ENCODE measurements at regions of chr1 and their contacts with region 1.

Region 1: DNA sequence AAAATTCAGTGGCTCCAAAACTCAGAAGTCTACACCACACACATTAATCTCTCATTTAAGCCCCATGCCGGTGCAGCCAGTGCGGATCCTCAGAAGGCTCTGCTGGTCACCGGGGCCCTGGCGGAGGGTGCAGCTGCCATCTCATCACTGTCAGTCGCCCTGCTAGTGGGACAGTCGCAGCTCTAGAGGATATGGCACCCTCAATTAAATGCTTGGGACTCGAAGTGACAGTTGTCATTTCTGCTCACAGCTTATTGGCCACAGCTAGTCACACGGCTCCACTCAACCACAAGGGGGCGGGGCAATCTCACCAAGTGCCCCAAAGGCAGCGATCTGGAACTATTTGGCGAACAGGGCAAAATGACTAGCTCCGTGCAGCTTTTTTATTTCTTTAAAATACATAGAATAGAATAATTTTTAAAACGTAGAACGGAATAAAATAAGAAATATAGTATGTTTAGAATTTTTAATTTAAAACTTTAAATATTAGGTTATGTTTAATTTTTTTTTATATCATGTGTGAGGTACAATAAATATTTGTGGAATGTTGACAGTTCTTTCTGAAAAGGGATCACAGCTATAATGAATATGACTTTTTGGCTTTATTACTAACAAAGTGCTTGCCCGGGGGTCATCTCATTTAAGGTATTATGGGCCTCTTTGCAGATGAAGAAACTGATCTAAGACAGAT is 8.0 kb upstream of the MAN1C1 start:
- DNase-seq: peak; percentile 94
- H3K4me3 Mint-ChIP-seq: no peak overlapping the region
- H3K27ac Mint-ChIP-seq: no peak overlapping the region
- H3K4me1 Mint-ChIP-seq: peaks cover 18% of the 10 kb centered on the region
- H3K27me3 Mint-ChIP-seq: peaks cover 63% of the 10 kb centered on the region

Region 2: DNA sequence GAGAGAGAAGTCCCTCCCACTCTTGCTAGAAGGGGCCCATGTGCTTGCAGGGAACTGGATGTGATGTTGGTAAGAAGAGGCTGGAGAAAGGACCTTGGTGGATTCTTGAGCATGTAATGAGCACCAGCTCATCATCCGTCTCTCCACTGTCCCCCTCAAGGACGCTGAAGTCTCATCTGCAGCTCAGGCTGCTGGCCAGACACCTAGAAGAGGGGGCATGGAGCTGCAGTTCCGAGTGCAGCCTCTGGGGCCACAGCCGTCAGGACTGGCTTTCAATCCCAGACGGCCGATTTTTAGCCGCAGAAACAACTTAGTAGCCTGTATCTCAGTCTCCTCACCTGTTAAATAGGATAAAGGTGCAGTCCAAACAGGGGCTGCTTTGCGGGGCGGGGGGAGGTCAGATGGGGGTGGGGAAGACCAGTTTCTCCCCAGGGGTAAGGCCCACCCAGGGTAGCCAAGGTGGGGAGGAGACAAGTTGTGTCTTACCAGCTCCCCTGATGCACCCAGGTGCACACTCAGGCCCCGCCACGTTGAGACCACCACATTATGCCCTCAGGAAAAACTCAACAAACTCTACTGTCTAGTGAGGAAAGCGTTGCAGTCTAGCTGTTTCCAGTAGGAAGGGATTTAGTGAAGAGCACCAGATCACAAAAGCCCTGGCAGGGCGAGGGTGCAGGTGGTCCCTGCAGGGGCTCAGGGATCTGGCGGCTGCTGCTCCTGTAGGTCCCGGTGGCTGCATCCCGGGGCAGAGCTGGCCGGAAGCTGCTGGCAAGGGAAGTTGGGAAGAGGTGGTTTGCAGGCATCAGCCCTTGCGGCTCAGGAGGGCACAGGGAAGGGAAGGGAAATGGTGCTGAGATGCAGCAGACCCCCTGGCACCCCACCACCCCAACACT is 35.7 kb before region 1 on chr1:
- CTCF ChIA-PET with region 1: no interaction called
- DNase-seq: peak; percentile 70
- H3K4me3 Mint-ChIP-seq: no peak overlapping the region
- H3K27ac Mint-ChIP-seq: no peak overlapping the region
- H3K4me1 Mint-ChIP-seq: peaks cover 21% of the 10 kb centered on the region
- H3K27me3 Mint-ChIP-seq: peaks cover 23% of the 10 kb centered on the region

Region 3: DNA sequence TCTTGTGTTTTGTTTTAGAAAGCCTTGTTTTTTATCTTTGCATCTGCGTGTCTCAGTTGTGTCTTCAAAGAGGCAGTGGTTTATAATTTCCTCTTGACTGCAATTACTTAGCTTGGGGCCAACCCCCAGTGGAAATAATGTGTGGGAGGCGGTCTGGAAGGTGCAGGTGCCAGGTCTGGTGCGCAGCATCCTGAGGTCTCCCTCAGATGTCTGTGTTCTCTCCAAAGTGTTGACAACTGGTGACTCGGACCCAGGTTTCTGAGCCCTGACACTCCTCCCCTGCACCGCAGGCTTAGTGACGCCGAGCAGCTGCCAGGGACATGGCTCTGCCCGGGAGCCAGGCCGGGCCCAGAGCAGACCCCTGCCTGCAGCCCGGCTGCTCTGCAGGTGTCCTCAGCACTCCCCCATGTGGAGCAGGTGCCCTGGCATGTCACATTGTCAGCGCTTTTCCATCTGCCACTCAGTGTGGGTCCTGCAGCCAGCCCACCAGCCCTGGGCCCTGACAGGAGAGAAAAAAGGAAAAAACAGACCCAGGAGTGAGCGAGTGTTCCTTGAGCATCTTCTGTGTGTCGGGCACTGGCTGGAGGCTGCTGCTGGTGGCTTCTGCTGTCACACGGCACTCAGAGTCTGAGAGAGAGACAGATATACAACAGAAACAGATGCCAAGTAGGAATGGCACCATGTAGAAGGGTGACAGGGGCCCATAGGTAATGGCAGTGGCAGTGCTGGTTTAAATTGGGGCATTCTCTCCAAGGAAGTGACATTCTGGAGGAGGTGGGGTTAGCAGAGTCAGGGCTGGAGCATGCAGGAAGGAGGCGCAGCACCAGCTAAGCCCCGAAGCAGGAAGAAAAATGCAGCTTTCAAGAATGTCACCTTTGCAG is 166.5 kb after region 1 on chr1:
- CTCF ChIA-PET with region 1: interaction called, 10 read pairs
- DNase-seq: peak; percentile 92
- H3K4me3 Mint-ChIP-seq: peak overlapping the region; percentile 53
- H3K27ac Mint-ChIP-seq: peak overlapping the region; percentile 93
- H3K4me1 Mint-ChIP-seq: peaks cover 80% of the 10 kb centered on the region
- H3K27me3 Mint-ChIP-seq: peaks cover 26% of the 10 kb centered on the region

Region 4: GRCh38 chr1:25796811-25797458 is 188.3 kb after region 1 on chr1:
- CTCF ChIA-PET with region 1: interaction called, 84 read pairs
- DNase-seq: peak; percentile 92
- H3K4me3 Mint-ChIP-seq: peak overlapping the region; percentile 55
- H3K27ac Mint-ChIP-seq: peak overlapping the region; percentile 46
- H3K4me1 Mint-ChIP-seq: peaks cover 61% of the 10 kb centered on the region
- H3K27me3 Mint-ChIP-seq: peaks cover 17% of the 10 kb centered on the region

Region 5: GRCh38 chr1:25802915-25803314 is 194.3 kb after region 1 on chr1:
- CTCF ChIA-PET with region 1: interaction called, 84 read pairs
- DNase-seq: peak; percentile 40
- H3K4me3 Mint-ChIP-seq: no peak overlapping the region
- H3K27ac Mint-ChIP-seq: no peak overlapping the region
- H3K4me1 Mint-ChIP-seq: peaks cover 43% of the 10 kb centered on the region
- H3K27me3 Mint-ChIP-seq: peaks cover 19% of the 10 kb centered on the region

Region 6: DNA sequence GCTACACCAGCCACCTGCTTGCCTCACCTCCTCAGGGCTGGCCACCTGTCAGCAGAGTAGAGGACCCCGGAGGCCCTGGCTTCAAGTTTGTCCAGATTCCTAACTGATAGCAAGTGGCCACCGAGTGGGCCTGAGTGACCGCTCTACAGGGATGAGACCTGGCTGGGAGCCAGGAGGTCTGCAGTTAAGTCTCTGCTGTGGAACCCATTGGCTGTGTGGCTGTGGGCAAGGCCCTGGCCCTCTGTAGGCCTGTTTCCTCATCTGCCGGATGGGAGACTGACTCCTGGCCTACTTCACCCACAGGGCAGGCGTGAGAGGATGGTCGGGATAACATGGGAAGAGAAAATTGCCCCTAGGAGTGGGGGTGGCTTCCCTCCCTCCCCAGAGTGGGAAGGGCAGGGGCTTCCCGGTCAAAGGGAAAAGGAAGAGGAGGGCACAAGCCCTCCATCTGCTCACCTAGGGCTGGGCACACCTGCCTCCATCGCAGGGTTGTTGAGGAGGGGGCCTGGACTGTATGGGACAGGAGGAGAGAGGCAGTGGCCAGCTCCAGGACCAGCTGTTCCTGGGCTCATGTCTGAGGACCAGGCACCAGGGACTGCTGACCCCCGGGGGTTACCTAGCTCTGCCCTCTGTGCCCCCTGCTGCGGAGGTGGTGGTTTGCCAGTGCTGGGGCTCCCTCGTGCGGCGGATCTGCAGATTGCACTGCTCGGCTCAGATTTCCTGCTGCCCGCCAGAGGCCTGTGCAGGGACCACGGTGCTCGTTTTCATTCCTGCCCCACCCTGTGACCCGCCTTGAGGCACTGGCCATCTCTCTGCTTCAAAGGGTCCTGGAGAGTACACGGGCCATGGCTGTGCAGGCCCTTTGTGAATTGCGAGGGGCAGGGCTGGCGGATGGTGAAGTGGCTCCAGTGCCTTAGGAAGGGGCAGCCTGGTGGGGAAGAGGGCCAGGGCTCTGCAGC is 202.0 kb after region 1 on chr1:
- CTCF ChIA-PET with region 1: interaction called, 14 read pairs
- DNase-seq: peak; percentile 85
- H3K4me3 Mint-ChIP-seq: no peak overlapping the region
- H3K27ac Mint-ChIP-seq: no peak overlapping the region
- H3K4me1 Mint-ChIP-seq: peaks cover 5% of the 10 kb centered on the region
- H3K27me3 Mint-ChIP-seq: peaks cover 4% of the 10 kb centered on the region